ENCODE measurements at regions of chr7 and their contacts with region 1.

Region 1: DNA sequence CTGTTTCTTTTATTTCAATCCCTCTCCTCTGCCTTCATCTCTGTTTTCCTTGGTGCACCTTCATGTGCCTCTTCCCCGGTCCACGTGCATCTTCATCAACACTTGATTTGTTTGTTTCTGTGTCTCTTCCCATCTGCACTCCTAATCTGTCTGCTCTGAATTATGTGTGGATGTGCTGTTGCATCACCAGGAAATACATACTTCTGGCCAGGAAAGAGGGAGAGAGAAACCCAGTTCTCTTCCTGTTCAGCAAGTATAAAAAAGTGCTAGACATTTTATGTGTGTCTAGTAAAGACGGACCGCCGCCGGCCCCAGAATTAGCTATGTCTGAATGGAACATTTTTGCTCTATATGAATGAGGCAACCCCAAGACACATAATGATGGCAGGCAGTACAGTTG is 93.8 kb downstream of the CALD1 start:
- DNase-seq: no peak
- ATAC-seq: no peak
- H3K4me3 ChIP-seq: no peak overlapping the region
- H3K27ac ChIP-seq: no peak overlapping the region
- H3K4me1 ChIP-seq: peaks cover 4% of the 10 kb centered on the region; the same call in 1 of the 2 replicates
- H3K27me3 ChIP-seq: no peaks in the 10 kb centered on the region
- CTCF ChIP-seq: no peak

Region 2: DNA sequence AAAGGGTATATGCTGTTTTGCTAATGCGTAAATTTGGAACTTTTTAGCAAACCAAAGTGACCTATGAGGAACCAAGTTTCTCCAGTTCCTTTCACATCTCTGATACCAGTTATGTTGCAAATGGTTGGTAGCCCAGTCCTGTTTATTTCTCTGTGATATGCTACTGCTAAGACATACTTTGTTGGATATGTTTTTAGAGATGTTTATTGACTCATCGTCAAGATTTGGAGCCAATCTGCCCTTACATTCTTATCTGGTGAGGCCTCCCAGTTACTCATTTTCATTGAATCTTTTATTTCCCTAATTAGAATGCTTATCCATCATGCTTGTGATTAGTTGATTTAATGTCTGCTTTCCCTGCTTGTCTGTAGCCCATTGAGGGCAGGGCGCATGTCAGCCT is 687.2 kb before region 1 on chr7:
- CTCF ChIA-PET with region 1: no interaction called
- POLR2A ChIA-PET with region 1: no interaction called
- intact Hi-C with region 1: no loop called
- DNase-seq: no peak
- ATAC-seq: no peak
- H3K4me3 ChIP-seq: no peak overlapping the region
- H3K27ac ChIP-seq: no peak overlapping the region
- H3K4me1 ChIP-seq: no peaks in the 10 kb centered on the region
- H3K27me3 ChIP-seq: no peaks in the 10 kb centered on the region
- CTCF ChIP-seq: no peak

Region 3: DNA sequence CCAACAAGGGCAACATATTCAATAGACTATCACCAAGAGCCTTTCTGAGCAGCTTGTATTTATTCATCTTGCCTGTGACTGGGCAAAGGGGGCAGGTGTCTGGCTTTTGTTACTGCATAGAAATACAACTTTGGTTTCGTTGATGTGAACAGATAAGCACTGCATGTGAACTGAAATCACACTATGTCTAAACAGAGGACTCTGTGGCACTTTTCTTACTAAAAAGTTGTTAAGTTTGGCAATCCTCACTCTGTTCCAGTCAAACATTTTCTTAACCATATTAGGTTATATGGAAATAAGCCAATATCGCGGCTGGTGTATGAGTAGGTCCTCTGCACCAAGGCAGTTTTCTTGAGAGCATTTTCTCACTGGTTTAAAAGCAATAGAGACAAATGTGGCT is 45.4 kb before region 1 on chr7:
- CTCF ChIA-PET with region 1: no interaction called
- POLR2A ChIA-PET with region 1: no interaction called
- intact Hi-C with region 1: no loop called
- DNase-seq: no peak
- ATAC-seq: no peak
- H3K4me3 ChIP-seq: no peak overlapping the region
- H3K27ac ChIP-seq: no peak overlapping the region
- H3K4me1 ChIP-seq: no peaks in the 10 kb centered on the region
- H3K27me3 ChIP-seq: no peaks in the 10 kb centered on the region
- CTCF ChIP-seq: no peak

Region 4: DNA sequence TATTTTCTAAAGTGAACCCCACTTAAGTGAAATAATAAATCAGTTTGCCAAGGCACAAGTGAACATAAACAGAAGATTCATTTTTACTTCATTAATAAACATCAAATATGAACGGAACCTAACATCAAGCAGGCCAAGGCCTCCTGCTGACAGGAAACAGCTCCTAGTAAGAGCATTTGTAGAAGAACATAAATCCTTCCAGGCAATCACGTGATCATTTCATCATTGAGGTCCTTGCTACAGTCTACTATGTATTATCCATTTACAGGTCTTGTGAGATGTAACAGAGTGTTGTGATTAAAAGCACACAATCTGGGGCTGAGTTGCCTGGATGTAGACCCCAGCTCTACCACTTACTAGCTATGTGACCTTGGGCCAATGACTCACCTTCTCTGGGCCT is 23.2 kb before region 1 on chr7:
- CTCF ChIA-PET with region 1: interaction called, 3 read pairs
- POLR2A ChIA-PET with region 1: no interaction called
- intact Hi-C with region 1: loop called (anchors 2 kb)
- DNase-seq: no peak
- ATAC-seq: no peak
- H3K4me3 ChIP-seq: no peak overlapping the region
- H3K27ac ChIP-seq: no peak overlapping the region
- H3K4me1 ChIP-seq: peaks cover 13% of the 10 kb centered on the region; the same call in 1 of the 2 replicates
- H3K27me3 ChIP-seq: no peaks in the 10 kb centered on the region
- CTCF ChIP-seq: no peak

Region 5: GRCh38 chr7:134891262-134891695 is 18.0 kb after region 1 on chr7:
- CTCF ChIA-PET with region 1: no interaction called
- POLR2A ChIA-PET with region 1: no interaction called
- intact Hi-C with region 1: loop called (anchors 1 kb)
- DNase-seq: peak; percentile 92
- ATAC-seq: peak; percentile 96
- H3K4me3 ChIP-seq: peak overlapping the region; percentile 81
- H3K27ac ChIP-seq: peak overlapping the region; percentile 65
- H3K4me1 ChIP-seq: peaks cover 22% of the 10 kb centered on the region
- H3K27me3 ChIP-seq: no peaks in the 10 kb centered on the region
- CTCF ChIP-seq: no peak

Region 6: GRCh38 chr7:134920026-134920753 is 46.9 kb after region 1 on chr7:
- CTCF ChIA-PET with region 1: no interaction called
- POLR2A ChIA-PET with region 1: no interaction called
- intact Hi-C with region 1: loop called (anchors 1 kb)
- DNase-seq: peak; percentile 80
- ATAC-seq: peak; percentile 93
- H3K4me3 ChIP-seq: no peak overlapping the region
- H3K27ac ChIP-seq: peak overlapping the region; percentile 35
- H3K4me1 ChIP-seq: peaks cover 18% of the 10 kb centered on the region
- H3K27me3 ChIP-seq: no peaks in the 10 kb centered on the region
- CTCF ChIP-seq: no peak

Measured in PC-3 (cell line).